Right ventricle myocardium inferior (tissue), 1 donor: ENCODE measurements at regions of chr4 and their contacts with region 1.

Region 1: GRCh38 chr4:165621983-165622382 is 243.2 kb downstream of the CPE start:
- DNase-seq: no peak
- ATAC-seq: no peak

Region 2: DNA sequence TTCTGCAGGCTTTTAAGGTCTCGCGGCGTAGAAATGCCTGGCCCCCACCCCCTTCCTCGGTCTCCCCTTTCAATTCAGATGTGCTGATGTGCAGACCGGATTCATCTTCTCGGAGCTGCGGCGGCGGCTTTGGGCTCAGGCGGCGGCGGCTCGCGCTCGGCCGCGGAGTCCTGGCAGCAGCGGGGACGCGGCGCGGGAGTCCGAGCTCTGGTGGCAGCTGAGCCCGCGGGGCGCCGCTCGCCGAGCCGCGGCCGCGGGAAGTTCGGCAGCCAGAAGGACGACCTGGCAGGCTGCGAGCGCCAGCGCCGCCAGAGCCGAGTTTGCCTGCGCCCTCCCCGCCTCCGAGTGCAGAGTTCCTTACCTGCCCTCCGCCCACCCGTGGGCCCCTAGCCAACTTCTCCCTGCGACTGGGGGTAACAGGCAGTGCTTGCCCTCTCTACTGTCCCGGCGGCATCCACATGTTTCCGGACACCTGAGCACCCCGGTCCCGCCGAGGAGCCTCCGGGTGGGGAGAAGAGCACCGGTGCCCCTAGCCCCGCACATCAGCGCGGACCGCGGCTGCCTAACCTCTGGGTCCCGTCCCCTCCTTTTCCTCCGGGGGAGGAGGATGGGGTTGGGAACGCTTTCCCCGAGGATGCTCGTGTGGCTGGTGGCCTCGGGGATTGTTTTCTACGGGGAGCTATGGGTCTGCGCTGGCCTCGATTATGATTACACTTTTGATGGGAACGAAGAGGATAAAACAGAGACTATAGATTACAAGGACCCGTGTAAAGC is 251.5 kb after region 1 on chr4:
- intact Hi-C with region 1: loop called (anchors 10 kb)
- DNase-seq: peak; percentile 71
- ATAC-seq: peak; percentile 80